ENCODE measurements at regions of chr1 and their contacts with region 1.

Region 1: DNA sequence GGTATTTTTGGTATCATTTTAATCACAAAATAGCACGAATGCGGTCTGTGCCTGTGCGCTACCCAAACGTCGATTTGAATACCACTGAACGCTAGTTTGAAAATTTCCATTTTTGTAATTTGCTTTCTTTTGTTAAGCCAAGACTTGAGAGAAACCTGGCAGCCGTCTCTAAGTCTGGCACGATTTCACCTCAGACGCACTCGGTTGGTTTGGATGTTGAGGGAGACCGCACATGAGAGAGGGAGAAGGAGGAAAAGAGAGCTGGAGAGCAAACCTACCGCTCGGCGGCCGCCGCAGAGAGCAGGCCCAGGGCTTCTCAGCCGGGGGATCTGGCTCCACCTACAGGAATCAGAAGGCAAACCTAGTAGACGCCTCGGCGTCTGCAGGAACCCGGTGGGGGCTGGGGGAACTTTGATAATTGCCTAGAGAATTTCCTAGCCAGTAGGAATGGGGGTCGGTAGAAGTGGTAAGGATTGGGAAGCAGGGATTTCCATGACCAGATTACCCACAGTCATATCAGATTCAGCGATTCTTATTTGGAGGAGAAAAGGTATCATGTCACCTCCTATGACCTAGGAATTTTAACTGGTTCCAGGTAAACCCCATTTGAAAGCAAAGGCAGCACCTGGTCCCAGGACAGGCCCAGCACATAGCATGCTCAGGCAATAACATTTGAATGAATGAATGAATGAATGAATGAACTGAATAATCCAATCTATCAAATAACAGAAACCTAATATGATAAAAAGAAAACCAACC is 83.2 kb downstream of the TM2D1 start:
- DNase-seq: peak; percentile 48
- ATAC-seq: peak; percentile 96
- H3K4me3 Mint-ChIP-seq: peak overlapping the region; percentile 89
- H3K27ac Mint-ChIP-seq: peak overlapping the region; percentile 69
- H3K4me1 Mint-ChIP-seq: peaks cover 14% of the 10 kb centered on the region
- H3K27me3 Mint-ChIP-seq: no peaks in the 10 kb centered on the region
- CTCF ChIP-seq: peak; percentile 82

Region 2: GRCh38 chr1:61049850-61050540 is 591.8 kb before region 1 on chr1:
- CTCF ChIA-PET with region 1: interaction called, 5 read pairs
- POLR2A ChIA-PET with region 1: no interaction called
- intact Hi-C with region 1: loop called (anchors 1 kb)
- DNase-seq: peak; percentile 82
- ATAC-seq: peak; percentile 87
- H3K4me3 Mint-ChIP-seq: peak overlapping the region; percentile 82
- H3K27ac Mint-ChIP-seq: no peak overlapping the region
- H3K4me1 Mint-ChIP-seq: peaks cover 29% of the 10 kb centered on the region
- H3K27me3 Mint-ChIP-seq: peaks cover 54% of the 10 kb centered on the region
- CTCF ChIP-seq: peak; percentile 36

Region 3: GRCh38 chr1:61539720-61540462 is 101.9 kb before region 1 on chr1:
- CTCF ChIA-PET with region 1: no interaction called
- POLR2A ChIA-PET with region 1: no interaction called
- intact Hi-C with region 1: loop called (anchors 5 kb)
- DNase-seq: no peak
- ATAC-seq: no peak
- H3K4me3 Mint-ChIP-seq: no peak overlapping the region
- H3K27ac Mint-ChIP-seq: no peak overlapping the region
- H3K4me1 Mint-ChIP-seq: no peaks in the 10 kb centered on the region
- H3K27me3 Mint-ChIP-seq: no peaks in the 10 kb centered on the region
- CTCF ChIP-seq: no peak

Region 4: DNA sequence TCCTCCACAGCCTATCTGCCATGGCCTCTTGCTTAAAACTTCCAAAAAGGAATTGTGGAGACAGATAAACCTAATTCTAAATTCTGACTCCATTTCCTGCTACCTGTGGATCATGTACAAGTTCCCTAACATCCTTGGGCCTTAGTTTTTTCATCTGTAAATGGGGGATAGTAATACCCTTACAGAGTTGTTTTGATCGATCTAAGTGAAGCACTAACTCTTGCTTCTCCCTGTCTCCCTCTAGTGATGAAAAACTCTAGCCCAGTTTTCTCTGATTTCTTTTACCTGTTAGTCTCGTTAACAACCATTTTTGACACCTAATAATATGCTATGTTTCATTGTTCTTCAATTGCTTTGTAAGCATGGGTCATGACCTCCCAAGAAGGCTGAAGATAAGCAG is 17.3 kb after region 1 on chr1:
- CTCF ChIA-PET with region 1: no interaction called
- POLR2A ChIA-PET with region 1: no interaction called
- intact Hi-C with region 1: no loop called
- DNase-seq: no peak
- ATAC-seq: no peak
- H3K4me3 Mint-ChIP-seq: no peak overlapping the region
- H3K27ac Mint-ChIP-seq: no peak overlapping the region
- H3K4me1 Mint-ChIP-seq: no peaks in the 10 kb centered on the region
- H3K27me3 Mint-ChIP-seq: peaks cover 2% of the 10 kb centered on the region
- CTCF ChIP-seq: no peak

Region 5: DNA sequence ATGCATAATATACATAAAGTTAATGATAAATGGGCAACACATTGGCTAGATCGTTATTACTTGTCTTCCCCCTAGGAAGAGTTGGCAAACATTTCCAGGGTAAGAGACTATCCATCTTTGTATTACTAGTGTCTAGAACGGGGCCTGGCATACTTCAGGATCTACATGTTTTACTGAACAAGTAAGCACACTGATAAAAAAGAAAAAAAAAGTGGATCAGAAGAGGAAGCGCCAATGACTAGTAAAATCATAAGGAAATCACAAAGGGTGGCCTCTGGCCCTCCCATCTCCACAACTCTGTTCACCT is 82.7 kb after region 1 on chr1:
- CTCF ChIA-PET with region 1: no interaction called
- POLR2A ChIA-PET with region 1: no interaction called
- intact Hi-C with region 1: no loop called
- DNase-seq: no peak
- ATAC-seq: no peak
- H3K4me3 Mint-ChIP-seq: peak overlapping the region; percentile 99
- H3K27ac Mint-ChIP-seq: peak overlapping the region; percentile 98
- H3K4me1 Mint-ChIP-seq: peaks cover 20% of the 10 kb centered on the region
- H3K27me3 Mint-ChIP-seq: no peaks in the 10 kb centered on the region
- CTCF ChIP-seq: no peak